ENCODE measurements at regions of chr3 and their contacts with region 1.

Region 1: GRCh38 chr3:137013955-137014688 is 56.3 kb downstream of the IL20RB start:
- DNase-seq: peak; percentile 90
- H3K4me3 Mint-ChIP-seq: no peak overlapping the region
- H3K27ac Mint-ChIP-seq: peak overlapping the region; percentile 46
- H3K4me1 Mint-ChIP-seq: peaks cover 29% of the 10 kb centered on the region
- H3K27me3 Mint-ChIP-seq: no peaks in the 10 kb centered on the region
- CTCF ChIP-seq: peak; percentile 77

Region 2: DNA sequence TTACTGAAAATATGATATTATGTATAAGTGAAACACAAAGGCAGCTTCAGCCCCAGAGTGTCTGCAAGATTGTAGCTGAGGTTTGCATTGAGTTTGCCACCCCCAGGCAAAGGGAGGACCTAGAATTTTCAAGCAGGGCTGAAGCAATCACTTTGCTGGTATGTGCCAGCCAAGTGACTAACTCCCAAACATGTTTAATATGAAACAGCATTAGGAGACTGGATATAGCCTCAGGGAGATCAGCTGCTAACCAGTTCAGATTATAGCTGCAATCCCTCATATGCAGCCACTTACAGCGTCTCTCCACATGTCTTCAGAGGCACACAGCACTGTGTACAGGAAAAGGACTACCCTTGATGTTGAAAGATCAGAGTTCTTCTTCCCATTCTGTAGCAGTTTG is 1087.0 kb before region 1 on chr3:
- CTCF ChIA-PET with region 1: no interaction called
- POLR2A ChIA-PET with region 1: no interaction called
- intact Hi-C with region 1: no loop called
- DNase-seq: peak; percentile 93
- H3K4me3 Mint-ChIP-seq: peak overlapping the region; percentile 5
- H3K27ac Mint-ChIP-seq: peak overlapping the region; percentile 85
- H3K4me1 Mint-ChIP-seq: peaks cover 50% of the 10 kb centered on the region
- H3K27me3 Mint-ChIP-seq: no peaks in the 10 kb centered on the region
- CTCF ChIP-seq: no peak

Region 3: DNA sequence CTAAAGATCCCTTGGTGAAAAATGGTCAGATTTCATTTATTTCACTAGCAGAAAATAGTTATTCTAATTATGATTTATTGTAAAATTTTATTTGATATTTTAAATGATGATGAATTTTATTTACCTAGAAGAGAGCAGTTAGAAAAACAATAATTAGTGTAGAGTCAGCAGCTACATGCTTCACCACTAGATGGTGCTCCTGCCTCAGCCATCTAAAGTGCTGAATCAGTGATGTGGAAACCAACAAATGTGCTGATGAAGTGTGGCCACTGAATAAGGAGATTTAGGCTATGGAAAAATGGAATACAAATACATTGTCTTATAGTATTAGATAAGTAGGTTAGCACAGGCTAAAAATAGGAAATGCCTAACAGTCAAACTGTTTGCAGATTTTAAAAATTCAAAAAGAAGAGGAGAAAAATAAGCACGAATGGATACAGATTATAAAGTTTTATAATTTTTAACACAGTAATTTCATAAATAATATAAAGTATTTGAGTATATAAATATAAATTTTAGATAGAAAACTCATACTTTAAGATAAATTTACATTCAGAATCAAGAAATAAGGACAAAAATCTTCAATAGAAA is 938.8 kb before region 1 on chr3:
- CTCF ChIA-PET with region 1: interaction called, 3 read pairs
- POLR2A ChIA-PET with region 1: no interaction called
- intact Hi-C with region 1: loop called (anchors 5 kb)
- DNase-seq: peak; percentile 86
- H3K4me3 Mint-ChIP-seq: no peak overlapping the region
- H3K27ac Mint-ChIP-seq: peak overlapping the region; percentile 8
- H3K4me1 Mint-ChIP-seq: peaks cover 22% of the 10 kb centered on the region
- H3K27me3 Mint-ChIP-seq: no peaks in the 10 kb centered on the region
- CTCF ChIP-seq: peak; percentile 86

Region 4: DNA sequence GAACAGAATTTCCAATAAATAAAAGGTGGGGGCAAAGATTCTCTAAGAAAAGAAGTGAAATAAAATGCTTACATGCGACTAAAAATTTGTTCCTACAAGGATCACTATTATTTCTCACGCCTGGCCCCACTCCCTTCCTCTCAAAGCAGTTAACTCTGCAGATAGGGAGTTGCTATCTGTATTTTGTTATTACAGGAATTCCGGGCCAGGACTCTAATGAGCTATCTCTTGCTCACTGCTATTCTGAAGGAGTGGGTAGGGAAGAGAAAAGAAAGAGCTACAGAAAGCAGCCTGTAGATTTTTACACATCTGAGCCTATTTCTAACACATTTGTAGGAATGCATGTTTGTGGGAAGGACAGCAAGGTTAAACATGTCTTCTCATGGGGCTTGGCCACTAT is 623.5 kb before region 1 on chr3:
- CTCF ChIA-PET with region 1: no interaction called
- POLR2A ChIA-PET with region 1: no interaction called
- intact Hi-C with region 1: loop called (anchors 5 kb)
- DNase-seq: no peak
- H3K4me3 Mint-ChIP-seq: no peak overlapping the region
- H3K27ac Mint-ChIP-seq: no peak overlapping the region
- H3K4me1 Mint-ChIP-seq: no peaks in the 10 kb centered on the region
- H3K27me3 Mint-ChIP-seq: no peaks in the 10 kb centered on the region
- CTCF ChIP-seq: no peak

Region 5: DNA sequence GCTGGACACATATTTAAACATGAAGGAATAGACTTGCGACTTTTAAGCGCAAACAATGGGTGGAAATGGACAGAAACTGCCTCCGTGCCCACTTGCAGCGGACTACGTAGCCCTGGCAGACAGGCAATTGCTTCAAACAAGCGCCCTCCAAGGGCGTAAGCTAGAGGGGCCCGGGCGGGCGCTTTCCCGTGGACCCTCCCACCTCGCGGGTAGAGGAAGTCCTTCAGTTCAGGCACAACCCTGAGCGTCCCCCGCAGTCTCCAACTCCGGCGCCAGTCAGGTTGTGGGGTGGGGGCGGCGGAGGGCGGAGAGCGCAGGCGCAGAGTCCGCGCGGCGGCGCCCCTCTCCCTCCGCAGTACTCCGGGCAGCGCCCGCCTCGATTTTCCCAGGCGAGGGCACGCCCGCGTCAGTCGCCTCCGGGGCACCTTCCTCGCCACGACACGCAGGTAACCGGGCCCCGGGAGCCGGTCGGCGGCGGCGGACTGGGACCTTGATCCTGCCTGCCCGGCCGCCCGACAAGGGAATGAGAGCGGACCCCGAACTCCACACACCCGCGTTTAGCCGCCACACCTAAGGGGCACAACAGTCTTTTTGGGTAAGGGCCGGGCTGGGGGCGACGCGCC is 195.2 kb before region 1 on chr3 and contains the start of gene SLC35G2:
- CTCF ChIA-PET with region 1: no interaction called
- POLR2A ChIA-PET with region 1: no interaction called
- intact Hi-C with region 1: loop called (anchors 5 kb)
- DNase-seq: peak; percentile 28
- H3K4me3 Mint-ChIP-seq: peak within 1 kb of the TSS; percentile 84
- H3K27ac Mint-ChIP-seq: peak within 1 kb of the TSS; percentile 94
- H3K4me1 Mint-ChIP-seq: peaks cover 16% of the 10 kb centered on the region
- H3K27me3 Mint-ChIP-seq: no peaks in the 10 kb centered on the region
- CTCF ChIP-seq: no peak
- total RNA-seq, gene SLC35G2: 7.6 and 8.5 TPM in 2 replicates

Region 6: GRCh38 chr3:136949708-136950107 is 64.4 kb before region 1 on chr3:
- CTCF ChIA-PET with region 1: interaction called, 59 read pairs
- POLR2A ChIA-PET with region 1: interaction called, 106 read pairs
- intact Hi-C with region 1: loop called (anchors 1 kb)
- DNase-seq: no peak
- H3K4me3 Mint-ChIP-seq: no peak overlapping the region
- H3K27ac Mint-ChIP-seq: no peak overlapping the region
- H3K4me1 Mint-ChIP-seq: peaks cover 42% of the 10 kb centered on the region
- H3K27me3 Mint-ChIP-seq: no peaks in the 10 kb centered on the region
- CTCF ChIP-seq: peak; percentile 12

Region 7: DNA sequence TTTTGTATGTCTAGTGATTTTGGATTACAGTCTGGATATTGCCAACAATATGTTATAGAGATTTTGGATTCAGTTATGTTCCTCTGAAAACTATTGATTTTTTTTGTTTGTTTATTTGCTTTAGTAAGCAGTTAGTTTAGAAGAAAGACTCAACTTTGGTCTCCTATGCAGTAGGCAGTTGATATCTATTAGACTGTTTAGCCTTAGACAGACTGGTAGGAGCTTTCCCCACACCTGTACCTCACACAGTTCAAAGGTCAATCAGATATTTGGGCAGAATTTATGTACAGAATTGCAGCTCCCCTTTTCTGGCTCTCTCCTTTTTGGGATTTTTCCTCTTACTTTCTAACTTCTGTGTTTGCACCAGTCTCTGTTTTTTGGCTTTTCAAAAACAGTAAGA is 14.1 kb before region 1 on chr3:
- CTCF ChIA-PET with region 1: interaction called, 14 read pairs
- POLR2A ChIA-PET with region 1: interaction called, 23 read pairs
- intact Hi-C with region 1: no loop called
- DNase-seq: no peak
- H3K4me3 Mint-ChIP-seq: no peak overlapping the region
- H3K27ac Mint-ChIP-seq: peak overlapping the region; percentile 75
- H3K4me1 Mint-ChIP-seq: peaks cover 50% of the 10 kb centered on the region
- H3K27me3 Mint-ChIP-seq: no peaks in the 10 kb centered on the region
- CTCF ChIP-seq: no peak